ENCODE measurements at regions of chr15 and their contacts with region 1.

Region 1: DNA sequence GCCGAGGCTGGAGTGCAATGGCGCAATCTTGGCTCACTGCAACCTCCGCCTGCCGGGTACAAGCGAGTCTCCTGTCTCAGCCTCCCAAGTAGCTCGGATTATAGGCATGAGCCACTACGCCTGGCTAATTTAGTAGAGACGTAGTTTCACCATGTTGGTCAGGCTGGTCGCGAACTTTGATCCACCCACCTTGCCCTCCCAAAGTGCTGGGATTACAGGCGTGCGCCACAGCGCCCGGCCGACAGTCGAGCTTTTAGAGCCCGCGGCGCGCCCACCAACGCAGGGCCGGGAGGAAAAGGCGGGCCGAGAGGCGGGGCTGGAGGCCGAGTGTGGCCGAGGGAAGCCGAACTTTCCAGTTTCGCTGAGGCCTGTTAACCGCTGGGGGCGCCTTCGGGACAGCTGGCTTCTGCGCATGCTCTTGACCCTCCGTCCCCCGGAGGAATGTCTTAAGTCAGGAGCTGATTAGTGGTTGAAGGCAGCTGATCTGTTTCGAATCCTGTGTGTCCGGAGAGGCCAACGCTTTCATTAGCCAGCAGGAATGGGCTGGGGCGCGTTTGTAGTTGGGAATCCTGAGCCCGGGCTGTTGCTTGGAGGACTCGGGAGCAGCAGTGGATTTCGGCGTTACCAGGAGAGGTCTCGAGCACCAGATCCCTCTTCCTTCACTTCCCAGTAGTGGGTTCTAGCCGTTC is 10.0 kb downstream of the RPLP1 start:
- DNase-seq: peak; percentile 94
- H3K4me3 Mint-ChIP-seq: peak overlapping the region; percentile 85
- H3K27ac Mint-ChIP-seq: peak overlapping the region; percentile 81
- H3K4me1 Mint-ChIP-seq: peaks cover 30% of the 10 kb centered on the region
- H3K27me3 Mint-ChIP-seq: no peaks in the 10 kb centered on the region

Region 2: DNA sequence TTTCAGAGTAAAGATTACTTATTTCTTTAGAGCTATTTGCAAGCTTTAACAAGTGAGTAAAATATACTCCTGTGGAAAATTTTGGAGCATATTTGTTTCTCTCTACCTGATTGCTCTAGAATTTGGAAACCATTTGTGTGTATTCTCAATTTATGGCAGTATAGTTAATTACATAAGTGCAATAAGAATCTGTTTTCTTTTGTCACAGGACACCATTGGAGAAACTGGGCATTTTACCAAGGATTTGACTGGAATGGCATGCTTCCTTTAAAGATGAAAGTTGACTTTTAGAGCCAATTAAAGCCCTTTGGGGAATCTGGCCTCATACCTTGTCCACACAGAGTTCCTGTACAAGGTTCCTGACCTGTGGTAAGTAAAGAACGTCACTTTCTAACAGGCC is 125.5 kb before region 1 on chr15:
- CTCF ChIA-PET with region 1: no interaction called
- POLR2A ChIA-PET with region 1: no interaction called
- intact Hi-C with region 1: no loop called
- DNase-seq: no peak
- H3K4me3 Mint-ChIP-seq: no peak overlapping the region
- H3K27ac Mint-ChIP-seq: no peak overlapping the region
- H3K4me1 Mint-ChIP-seq: no peaks in the 10 kb centered on the region
- H3K27me3 Mint-ChIP-seq: peaks cover 3% of the 10 kb centered on the region

Region 3: DNA sequence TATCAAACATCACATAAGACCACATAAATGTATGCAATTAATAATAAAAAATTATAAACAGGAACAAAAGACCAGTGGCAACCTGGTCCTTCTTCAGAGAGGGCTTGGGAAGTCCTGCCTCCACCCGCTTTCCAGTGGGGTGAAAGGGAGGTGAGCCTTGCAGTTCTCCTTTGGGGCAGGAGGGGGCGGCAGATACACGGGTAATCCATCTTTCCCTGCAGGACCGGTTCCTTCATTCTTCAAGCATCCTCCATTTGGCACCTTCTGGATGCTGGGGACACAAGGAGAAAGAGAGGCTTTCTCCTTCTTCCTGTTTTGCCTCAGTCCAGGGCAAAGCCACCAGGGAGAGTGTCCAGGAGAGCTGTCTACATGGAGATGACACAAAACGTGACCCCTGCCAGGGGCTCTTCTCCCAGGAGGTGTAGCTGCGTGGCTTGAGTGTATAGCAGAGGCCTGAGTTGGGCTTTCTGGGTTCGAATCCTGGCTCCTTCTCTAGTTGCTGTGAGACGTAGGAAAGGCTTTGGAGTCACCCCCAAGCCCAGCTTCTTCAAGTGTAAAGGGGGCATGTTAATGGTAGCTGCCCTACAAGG is 13.2 kb after region 1 on chr15:
- CTCF ChIA-PET with region 1: interaction called, 30 read pairs
- POLR2A ChIA-PET with region 1: no interaction called
- intact Hi-C with region 1: no loop called
- DNase-seq: peak; percentile 83
- H3K4me3 Mint-ChIP-seq: no peak overlapping the region
- H3K27ac Mint-ChIP-seq: no peak overlapping the region
- H3K4me1 Mint-ChIP-seq: no peaks in the 10 kb centered on the region
- H3K27me3 Mint-ChIP-seq: peaks cover 4% of the 10 kb centered on the region

Region 4: GRCh38 chr15:69660658-69661405 is 198.2 kb after region 1 on chr15:
- CTCF ChIA-PET with region 1: no interaction called
- POLR2A ChIA-PET with region 1: no interaction called
- intact Hi-C with region 1: no loop called
- DNase-seq: no peak
- H3K4me3 Mint-ChIP-seq: no peak overlapping the region
- H3K27ac Mint-ChIP-seq: no peak overlapping the region
- H3K4me1 Mint-ChIP-seq: peaks cover 3% of the 10 kb centered on the region
- H3K27me3 Mint-ChIP-seq: no peaks in the 10 kb centered on the region

Measured in activated CD4-positive, alpha-beta memory T cell treated with anti-CD3 and anti-CD28 coated beads for 36 hours (primary cell).